ENCODE measurements at regions of chr20 and their contacts with region 1.

Region 1: DNA sequence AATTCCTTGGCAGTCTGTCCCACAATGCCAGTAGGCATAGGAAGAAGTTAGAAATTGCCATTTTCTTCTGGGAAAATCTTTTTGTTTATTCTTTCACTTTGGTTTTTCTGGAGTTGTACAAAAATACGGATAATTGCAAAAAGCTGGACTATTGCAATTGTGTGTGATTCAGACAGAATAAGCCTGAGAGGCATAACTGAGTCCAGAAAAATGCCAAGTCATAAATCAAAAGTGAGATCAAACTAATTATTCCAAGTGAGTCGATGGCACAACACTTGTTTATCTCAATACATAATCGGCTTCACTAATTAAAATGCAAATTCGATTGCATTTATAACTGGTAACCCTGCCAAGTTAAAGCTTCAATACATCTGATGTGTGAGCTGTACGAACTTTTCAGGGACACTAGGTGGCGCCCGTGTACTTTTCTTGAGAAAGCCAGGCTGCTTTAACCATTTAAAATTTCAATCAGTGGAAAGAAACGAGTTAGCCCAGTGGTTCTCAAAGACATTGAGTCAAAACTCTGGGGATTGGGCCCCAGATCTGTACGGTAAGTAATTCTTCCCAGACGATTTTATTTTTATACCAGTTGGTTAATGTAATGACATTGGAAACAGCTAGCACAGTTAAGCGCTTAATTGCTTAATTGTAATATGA is 102.6 kb downstream of the LAMP5 start:
- DNase-seq: peak; percentile 74 to 82 (median 79)
- ATAC-seq: peak; percentile 73
- H3K4me3 ChIP-seq: no peak overlapping the region
- H3K27ac ChIP-seq: no peak overlapping the region
- H3K4me1 ChIP-seq: peaks cover 11% of the 10 kb centered on the region
- H3K27me3 ChIP-seq: no peaks in the 10 kb centered on the region
- CTCF ChIP-seq: peak; percentile 71 to 92 (median 84)
- POLR2A ChIP-seq: no peak

Region 2: DNA sequence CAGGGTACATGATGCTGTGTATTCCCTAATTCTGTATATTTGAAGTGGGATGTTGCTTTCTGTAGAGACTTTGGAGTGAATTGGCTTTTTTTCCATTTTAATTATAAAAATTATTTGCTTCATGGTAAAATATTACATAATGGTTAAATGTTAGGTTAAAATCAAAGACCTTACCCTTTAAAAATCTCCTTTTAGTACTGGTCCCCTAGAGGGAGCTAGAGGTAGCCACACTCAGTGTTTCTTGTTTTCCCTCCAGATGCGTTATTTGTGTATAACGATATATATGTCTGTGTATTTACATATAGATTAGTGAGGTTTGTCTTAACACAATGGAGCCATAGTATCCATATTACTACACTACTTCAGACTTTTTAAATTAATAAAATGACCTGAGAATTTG is 401.4 kb before region 1 on chr20:
- intact Hi-C with region 1: no loop called
- DNase-seq: no peak
- ATAC-seq: no peak
- H3K4me3 ChIP-seq: no peak overlapping the region
- H3K27ac ChIP-seq: no peak overlapping the region
- H3K4me1 ChIP-seq: no peaks in the 10 kb centered on the region
- H3K27me3 ChIP-seq: no peaks in the 10 kb centered on the region
- CTCF ChIP-seq: no peak
- POLR2A ChIP-seq: no peak

Region 3: GRCh38 chr20:9912858-9913434 is 296.0 kb after region 1 on chr20:
- intact Hi-C with region 1: loop called (anchors 5 kb)
- DNase-seq: peak; percentile 48 to 71 (median 58)
- ATAC-seq: peak; percentile 55
- H3K4me3 ChIP-seq: no peak overlapping the region
- H3K27ac ChIP-seq: no peak overlapping the region
- H3K4me1 ChIP-seq: peaks cover 4% of the 10 kb centered on the region
- H3K27me3 ChIP-seq: no peaks in the 10 kb centered on the region
- CTCF ChIP-seq: peak; percentile 67 to 76 (median 71)
- POLR2A ChIP-seq: no peak

Measured in body of pancreas (tissue), 4 donors.